ENCODE measurements at regions of chr7 and their contacts with region 1.

Region 1: DNA sequence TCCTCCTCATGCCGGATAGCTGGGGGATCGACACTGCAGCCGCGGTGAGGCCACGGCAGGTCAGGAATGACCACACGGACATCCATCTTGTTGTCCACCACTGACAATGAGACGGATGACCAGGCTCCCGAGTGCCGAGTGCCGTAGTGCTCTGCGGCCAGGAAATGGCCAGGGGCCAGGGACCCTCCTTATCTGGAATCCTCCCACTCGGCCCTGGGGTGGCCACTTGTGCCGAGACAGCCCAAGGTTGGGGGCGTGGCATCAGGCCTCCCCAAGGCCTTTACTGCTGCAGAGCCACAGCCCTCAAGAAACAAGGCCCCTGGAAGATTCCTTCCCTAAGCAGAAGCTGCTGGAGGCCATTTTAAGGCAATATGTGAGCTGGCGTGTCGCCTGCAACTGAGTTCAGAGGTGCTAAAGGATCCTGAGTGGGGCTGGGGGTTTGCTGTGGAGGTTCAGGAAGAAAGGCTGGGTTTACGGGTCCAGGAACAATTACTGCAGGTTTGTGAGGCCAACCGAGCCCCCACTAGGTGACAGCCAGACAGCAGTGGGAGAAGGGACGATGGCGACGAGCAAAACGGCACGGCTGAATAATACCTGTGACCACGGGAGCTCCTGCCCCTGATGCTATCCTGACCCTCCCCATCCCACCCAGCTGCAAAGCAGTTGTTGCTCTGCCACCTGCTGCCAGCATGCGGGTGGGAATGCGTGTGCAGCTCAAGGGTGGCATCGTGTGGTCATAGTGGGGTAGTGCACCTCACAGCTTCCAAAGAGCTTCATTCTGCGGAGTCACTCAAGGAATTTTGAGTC is 31.6 kb upstream of the LEP start:
- ATAC-seq: peak; percentile 71 to 88 (median 84)
- H3K4me3 ChIP-seq: no peak overlapping the region
- H3K27ac ChIP-seq: no peak overlapping the region
- H3K4me1 ChIP-seq: peaks cover 0 to 4% of the 10 kb centered on the region in 2 donors

Region 2: DNA sequence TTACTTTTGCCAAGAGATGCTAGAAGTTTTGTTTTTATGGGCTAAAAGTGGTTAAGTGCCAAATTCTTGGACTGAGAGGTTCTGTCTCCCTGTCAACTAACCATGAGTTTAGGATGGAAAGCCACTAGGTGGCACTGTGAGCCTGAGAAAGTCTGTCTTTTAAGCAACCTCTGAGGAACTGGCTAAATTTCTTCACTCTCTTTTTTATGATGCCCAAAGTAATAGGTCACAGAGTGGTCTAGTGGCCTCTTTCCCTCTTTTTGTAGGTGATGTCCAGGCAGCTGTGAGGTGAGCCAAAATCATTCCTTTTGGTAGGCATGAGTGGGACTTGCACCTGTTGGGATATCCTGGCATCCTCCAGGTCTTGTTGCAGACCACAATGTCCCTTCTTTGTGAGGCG is 500.6 kb before region 1 on chr7:
- in situ Hi-C with region 1: loop called in 8 of 9 experiments (anchors 10 to 25 kb)
- ATAC-seq: peak in 7 of 8 experiments; percentile 28 to 93 (median 78)
- H3K4me3 ChIP-seq: no peak overlapping the region
- H3K27ac ChIP-seq: no peak overlapping the region
- H3K4me1 ChIP-seq: no peaks in the 10 kb centered on the region

Region 3: DNA sequence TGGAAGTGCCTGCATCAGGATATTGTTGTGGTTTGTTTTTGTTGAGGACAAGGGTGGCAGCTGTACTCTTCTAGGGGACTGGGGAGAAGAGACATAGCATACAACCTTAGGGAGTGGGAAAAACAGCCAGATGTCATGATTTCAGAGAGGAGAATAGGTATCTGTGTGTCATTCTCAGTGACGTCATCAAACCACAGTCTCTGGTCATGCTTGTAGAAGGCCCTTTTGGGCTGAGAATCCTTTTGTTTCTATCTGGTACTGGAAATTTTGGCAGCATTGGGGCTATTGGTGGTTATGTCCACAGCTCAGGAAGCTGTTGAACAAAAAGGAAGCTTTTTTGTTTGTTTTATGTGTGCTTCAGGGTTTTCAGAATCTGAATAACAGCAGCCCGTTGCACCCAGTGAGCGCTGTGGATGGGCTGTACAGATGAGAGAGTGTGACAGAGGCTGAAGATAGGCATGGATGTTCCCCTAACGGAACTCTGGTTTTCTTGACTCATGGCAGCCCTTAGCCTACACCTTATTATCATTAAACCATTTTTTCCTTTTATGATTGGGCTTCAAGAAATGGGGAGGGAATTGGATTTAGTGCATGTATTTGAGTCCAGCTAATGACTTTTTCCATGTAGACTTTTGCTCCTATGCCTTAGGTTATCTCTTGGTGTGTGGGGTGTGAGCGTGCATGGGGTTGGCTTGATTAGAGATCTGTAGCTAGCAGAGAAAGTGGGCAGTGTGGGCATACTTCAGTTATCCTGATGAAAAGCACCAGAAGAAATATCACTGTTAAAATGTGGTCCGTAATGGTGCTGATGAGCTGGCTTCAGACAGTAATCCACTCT is 491.7 kb before region 1 on chr7:
- in situ Hi-C with region 1: loop called in 8 of 9 experiments (anchors 10 to 25 kb)
- ATAC-seq: peak in 1 of 8 experiments; percentile 27
- H3K4me3 ChIP-seq: no peak overlapping the region
- H3K27ac ChIP-seq: peak overlapping the region in 1 of 2 donors; percentile 27
- H3K4me1 ChIP-seq: peaks cover 0 to 11% of the 10 kb centered on the region in 2 donors

Region 4: DNA sequence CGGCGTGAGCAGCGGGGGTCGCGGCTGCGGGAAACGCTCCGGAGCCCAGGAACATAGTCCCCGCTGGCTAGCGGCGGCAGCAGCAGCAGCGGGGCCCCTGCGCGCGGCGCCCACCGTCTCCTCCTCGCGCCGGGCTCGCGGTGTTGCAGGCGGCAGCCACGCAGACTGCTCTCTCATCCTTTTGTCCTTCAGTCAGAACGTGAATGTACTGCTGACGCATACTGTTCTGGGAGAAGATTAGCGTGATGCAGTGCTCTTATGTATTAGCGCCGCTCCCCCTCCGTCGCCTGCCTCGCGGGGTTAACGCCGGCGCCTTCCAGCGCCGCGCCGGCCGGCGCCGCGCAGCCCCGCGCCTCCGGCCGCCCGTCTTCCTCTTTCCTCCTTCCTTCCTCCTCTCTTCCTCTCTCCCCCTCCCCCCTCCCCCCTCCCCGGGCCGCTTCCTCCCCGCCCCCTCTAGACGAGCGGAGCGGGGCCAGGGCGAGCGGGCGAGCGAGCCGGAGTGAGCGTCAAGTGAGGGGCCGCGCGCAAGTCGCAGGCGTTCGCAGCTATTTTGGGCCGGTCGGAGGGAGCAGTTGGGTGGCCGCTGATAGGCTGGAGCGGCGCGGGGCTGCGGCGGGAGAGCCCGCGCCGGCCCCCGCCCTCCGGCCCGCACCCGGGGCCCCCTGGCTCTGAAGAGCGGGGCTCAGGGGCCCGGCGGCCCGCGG is 177.4 kb before region 1 on chr7:
- in situ Hi-C with region 1: loop called in 1 of 9 experiments (anchors 25 kb)
- ATAC-seq: peak; percentile 73 to 85 (median 78)
- H3K4me3 ChIP-seq: peak overlapping the region; percentile 54 to 75 (median 61)
- H3K27ac ChIP-seq: peak overlapping the region; percentile 89 to 90
- H3K4me1 ChIP-seq: peaks cover 39 to 40% of the 10 kb centered on the region in 2 donors

Region 5: DNA sequence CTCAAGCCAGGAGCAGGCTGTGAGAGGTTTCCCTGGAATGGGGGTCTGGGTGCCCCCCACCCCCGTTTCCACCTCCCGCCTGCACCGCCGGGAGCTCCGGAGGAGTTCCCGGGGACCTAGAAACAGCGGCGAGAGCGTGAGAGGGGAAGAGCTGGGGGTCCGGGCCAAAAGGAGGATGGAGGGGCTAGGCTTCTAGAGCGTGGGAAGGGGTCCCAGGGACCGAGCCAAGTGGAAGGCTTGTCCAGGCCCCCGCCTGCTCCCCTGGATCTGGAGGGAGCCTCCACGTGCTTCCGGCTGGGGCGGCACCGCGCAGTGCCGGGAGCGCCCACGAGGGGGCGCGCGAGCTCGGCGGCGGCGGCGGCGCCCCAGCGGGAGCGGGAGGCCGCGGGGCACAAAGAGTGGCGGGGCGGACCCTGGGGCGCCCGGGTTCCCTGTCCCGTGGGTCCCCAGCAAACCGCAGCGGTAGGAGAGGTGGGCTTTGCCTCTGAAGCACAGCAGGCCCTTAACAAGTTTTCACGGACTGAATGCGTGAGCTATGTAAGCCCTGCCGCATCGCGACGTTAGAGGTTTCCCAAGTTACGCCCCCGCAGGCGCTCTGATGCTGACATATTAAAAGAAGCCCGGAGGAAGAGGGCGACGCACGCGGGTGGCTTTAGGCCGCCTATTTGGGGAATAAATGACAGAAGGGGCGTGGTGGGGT is 73.8 kb before region 1 on chr7:
- in situ Hi-C with region 1: loop called in 1 of 9 experiments (anchors 10 kb)
- ATAC-seq: peak; percentile 92 to 97 (median 95)
- H3K4me3 ChIP-seq: peak overlapping the region; percentile 42 to 68 (median 54)
- H3K27ac ChIP-seq: no peak overlapping the region
- H3K4me1 ChIP-seq: peaks cover 4 to 6% of the 10 kb centered on the region in 2 donors

Region 6: DNA sequence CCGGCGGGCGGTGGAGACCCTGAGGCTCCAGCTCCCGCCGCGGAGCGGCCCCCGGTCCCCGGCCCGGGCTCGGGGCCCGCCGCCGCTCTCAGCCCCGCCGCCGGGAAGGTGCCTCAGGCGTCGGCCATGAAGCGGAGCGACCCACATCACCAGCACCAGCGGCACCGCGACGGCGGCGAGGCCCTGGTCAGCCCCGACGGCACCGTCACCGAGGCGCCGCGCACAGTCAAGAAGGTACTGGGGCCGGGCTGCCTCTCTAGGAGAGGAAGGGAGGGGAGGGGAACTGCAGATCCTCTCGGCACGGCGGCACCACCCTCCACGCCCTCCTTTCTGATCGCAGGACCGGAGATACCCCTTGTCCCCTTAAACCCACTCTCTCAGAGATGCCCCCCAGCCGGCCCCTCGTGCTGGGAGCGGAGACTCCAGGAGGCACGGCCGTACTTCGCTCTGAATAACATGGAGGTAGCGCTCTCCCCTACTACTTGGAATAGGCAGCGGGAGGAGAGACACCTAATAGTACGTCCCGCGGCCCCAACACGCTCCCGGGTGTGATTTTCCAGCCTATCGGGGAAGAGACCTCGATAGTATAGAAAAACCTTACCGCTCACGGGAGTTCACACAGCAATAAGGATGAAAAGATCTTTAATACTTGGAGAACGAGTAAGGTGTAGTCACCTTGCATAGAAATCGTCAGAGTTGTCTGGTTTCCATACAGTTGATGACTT is 1015.9 kb after region 1 on chr7:
- in situ Hi-C with region 1: no loop called
- ATAC-seq: peak; percentile 45 to 56 (median 52)
- H3K4me3 ChIP-seq: peak overlapping the region; percentile 71 to 95 (median 76)
- H3K27ac ChIP-seq: peak overlapping the region; percentile 81 to 86
- H3K4me1 ChIP-seq: peaks cover 12 to 16% of the 10 kb centered on the region in 2 donors

Measured in motor neuron (in vitro differentiated cells).